ENCODE measurements at regions of chr14 and their contacts with region 1.

Region 1: DNA sequence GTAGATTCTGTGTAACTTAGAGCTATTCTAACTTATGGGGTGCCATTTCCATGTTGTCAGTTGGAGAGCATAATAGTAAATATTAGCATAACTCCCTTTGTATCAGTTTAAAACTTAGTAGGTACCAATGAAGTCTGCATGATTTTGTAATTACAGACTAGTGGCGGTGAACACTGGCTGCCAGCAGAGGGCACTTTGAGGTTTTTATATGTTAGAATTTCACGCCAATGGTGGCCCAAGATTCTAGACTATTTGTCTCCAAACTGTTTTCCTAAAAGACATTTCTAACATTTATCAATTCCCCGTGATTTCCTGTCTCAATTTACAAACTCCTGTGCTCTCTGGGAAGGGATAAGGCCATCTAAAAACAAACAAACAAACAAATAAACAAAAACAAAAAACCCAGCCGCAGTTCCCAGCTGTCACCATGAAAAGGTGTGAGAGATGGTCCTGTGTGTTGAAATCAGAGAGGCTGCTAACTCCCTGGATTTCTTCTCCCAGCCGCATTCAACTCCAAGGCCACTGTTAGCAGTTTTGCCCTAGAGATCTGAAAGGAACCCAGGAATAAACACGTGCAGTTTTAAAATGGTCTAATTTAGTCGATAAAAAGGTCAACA is 57.6 kb downstream of the BRMS1L start:
- DNase-seq: peak; percentile 56
- ATAC-seq: no peak
- H3K4me3 Mint-ChIP-seq: no peak overlapping the region
- H3K27ac Mint-ChIP-seq: no peak overlapping the region
- H3K4me1 Mint-ChIP-seq: no peaks in the 10 kb centered on the region
- H3K27me3 Mint-ChIP-seq: no peaks in the 10 kb centered on the region

Region 2: DNA sequence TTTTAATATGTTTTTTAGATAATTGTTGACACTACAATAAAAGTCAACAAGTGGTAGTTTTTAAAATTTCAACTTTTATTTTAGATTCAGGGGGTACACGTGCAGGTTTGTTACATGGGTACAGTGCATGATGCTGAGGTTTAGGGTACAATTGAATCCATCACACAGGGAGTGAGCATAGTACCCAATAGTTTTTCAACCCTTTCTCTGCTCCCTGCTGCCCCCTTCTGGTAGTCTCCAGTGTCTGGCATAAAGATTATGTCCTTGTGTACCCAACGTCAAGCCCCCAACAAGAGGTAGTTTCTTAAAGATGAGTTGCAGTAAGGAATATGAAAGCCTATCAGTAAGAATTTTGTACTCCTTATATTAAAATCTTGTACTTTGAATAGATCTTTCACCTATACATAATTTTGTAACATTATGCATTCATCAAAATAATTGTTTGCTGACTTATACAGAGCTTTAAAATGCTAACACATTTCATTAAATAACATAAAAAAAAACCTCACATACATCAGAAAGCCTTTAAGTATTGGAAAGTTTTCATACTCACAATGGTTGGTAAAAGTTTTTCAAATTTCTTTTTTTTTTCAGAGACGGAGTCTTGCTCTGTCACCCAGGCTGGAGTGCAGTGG is 69.3 kb before region 1 on chr14:
- CTCF ChIA-PET with region 1: no interaction called
- POLR2A ChIA-PET with region 1: no interaction called
- intact Hi-C with region 1: no loop called
- DNase-seq: peak; percentile 90
- ATAC-seq: peak; percentile 89
- H3K4me3 Mint-ChIP-seq: no peak overlapping the region
- H3K27ac Mint-ChIP-seq: no peak overlapping the region
- H3K4me1 Mint-ChIP-seq: no peaks in the 10 kb centered on the region
- H3K27me3 Mint-ChIP-seq: no peaks in the 10 kb centered on the region

Region 3: DNA sequence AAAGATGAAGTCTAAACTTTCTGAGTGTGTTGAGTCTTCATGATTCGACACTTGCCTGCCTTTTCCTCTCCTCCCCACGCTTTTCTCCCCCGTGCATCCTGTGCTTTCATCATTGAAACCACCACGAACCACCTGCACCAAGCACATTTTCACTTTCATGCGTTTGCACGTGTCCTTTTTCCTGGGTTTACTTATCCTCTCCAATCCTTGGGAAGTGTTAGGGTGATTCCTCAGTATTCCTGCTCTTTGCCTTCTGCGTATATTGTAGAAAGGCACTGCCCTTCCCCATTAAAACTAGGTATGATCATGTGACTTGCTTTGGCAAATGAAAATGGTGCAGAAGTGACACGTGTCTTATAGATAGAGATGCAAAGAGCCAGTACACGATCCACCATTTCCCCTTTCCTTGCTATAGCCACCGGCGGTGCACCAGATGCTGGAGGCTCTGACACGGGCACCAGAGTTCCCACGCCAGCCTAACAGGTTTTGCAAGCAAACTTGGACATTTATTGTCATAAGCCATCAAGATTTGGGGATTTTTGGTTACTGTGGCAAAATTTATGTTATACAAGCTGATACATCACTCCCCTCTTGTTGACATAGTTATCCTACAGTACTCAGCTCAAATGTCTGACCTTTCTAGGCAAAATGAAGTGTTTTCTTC is 49.0 kb after region 1 on chr14:
- CTCF ChIA-PET with region 1: interaction called, 4 read pairs
- POLR2A ChIA-PET with region 1: no interaction called
- intact Hi-C with region 1: loop called in 1 of 2 experiments (anchors 5 kb)
- DNase-seq: peak; percentile 70
- ATAC-seq: peak; percentile 89
- H3K4me3 Mint-ChIP-seq: peak overlapping the region; percentile 58
- H3K27ac Mint-ChIP-seq: peak overlapping the region; percentile 75
- H3K4me1 Mint-ChIP-seq: peaks cover 36% of the 10 kb centered on the region
- H3K27me3 Mint-ChIP-seq: peaks cover 2% of the 10 kb centered on the region

Region 4: DNA sequence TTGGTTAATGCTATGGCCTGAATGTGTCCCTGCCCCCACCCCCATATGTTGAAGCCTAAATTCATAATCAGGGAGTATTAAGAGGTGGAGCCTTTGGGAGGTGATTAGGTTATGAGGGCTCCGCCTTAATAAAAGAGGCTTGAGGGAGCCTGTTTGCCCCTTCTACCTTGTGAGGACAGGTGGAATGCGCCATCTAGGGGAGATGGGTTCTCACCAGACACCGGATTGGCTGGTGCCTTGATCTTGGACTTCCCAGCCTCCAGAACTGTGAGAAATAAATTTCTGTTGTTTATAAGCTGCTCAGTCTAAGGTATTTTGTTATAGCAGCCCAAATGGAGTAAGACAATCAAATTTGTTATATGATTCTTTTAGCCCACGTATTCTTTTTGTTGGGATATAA is 144.4 kb after region 1 on chr14:
- CTCF ChIA-PET with region 1: interaction called, 4 read pairs
- POLR2A ChIA-PET with region 1: no interaction called
- intact Hi-C with region 1: loop called in 1 of 2 experiments (anchors 2 kb)
- DNase-seq: peak; percentile 30
- ATAC-seq: peak; percentile 47
- H3K4me3 Mint-ChIP-seq: no peak overlapping the region
- H3K27ac Mint-ChIP-seq: no peak overlapping the region
- H3K4me1 Mint-ChIP-seq: no peaks in the 10 kb centered on the region
- H3K27me3 Mint-ChIP-seq: peaks cover 12% of the 10 kb centered on the region

Region 5: GRCh38 chr14:36167431-36167830 is 283.6 kb after region 1 on chr14:
- CTCF ChIA-PET with region 1: no interaction called
- POLR2A ChIA-PET with region 1: no interaction called
- intact Hi-C with region 1: no loop called
- DNase-seq: no peak
- ATAC-seq: no peak
- H3K4me3 Mint-ChIP-seq: no peak overlapping the region
- H3K27ac Mint-ChIP-seq: no peak overlapping the region
- H3K4me1 Mint-ChIP-seq: no peaks in the 10 kb centered on the region
- H3K27me3 Mint-ChIP-seq: peaks cover 20% of the 10 kb centered on the region

Region 6: DNA sequence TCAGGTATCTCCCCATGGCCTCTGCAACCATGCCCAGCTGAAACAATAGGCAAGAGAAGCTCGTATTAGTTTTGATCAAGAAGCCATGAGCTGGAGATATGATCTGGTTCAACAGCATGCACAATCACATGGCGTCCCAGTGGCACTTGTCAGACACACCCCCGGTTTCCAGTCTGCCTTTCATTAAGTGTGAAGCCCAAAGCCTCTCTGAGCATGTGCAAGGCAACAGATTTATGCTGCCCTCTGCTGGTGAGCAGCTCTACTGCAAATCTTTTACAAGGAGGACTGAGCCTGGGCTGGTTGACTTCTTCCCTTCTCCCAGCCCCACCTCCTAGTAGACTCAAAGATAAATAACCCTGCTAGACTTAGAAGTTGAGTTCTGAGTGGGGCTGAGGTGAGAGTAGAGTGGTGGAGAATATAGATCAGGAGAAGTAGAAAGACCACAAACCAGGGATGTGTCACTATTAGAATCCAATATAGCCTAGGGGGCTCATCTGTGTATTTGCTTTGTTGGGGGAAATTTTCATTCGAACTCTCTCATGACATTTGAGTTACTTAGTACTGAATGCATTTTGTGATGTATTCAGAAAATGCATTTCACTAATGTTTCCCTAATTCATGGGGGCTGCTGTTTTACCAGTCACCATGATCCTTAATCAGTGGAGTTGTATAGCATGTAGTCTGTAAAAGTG is 490.3 kb after region 1 on chr14:
- CTCF ChIA-PET with region 1: interaction called, 7 read pairs
- POLR2A ChIA-PET with region 1: no interaction called
- intact Hi-C with region 1: loop called (anchors 1 to 2 kb)
- DNase-seq: peak; percentile 84
- ATAC-seq: peak; percentile 84
- H3K4me3 Mint-ChIP-seq: no peak overlapping the region
- H3K27ac Mint-ChIP-seq: no peak overlapping the region
- H3K4me1 Mint-ChIP-seq: no peaks in the 10 kb centered on the region
- H3K27me3 Mint-ChIP-seq: peaks cover 5% of the 10 kb centered on the region